BJ (cell line): ENCODE measurements at regions of chr11 and their contacts with region 1.

Region 1: GRCh38 chr11:61158616-61159381 is 2.4 kb downstream of the VPS37C start:
- DNase-seq: peak; percentile 67
- H3K4me3 ChIP-seq: no peak overlapping the region
- H3K27me3 ChIP-seq: no peaks in the 10 kb centered on the region
- CTCF ChIP-seq: no peak

Region 2: GRCh38 chr11:61102667-61103571 is 55.9 kb before region 1 on chr11:
- CTCF ChIA-PET with region 1: no interaction called
- POLR2A ChIA-PET with region 1: no interaction called
- DNase-seq: no peak
- H3K4me3 ChIP-seq: no peak overlapping the region
- H3K27me3 ChIP-seq: no peaks in the 10 kb centered on the region
- CTCF ChIP-seq: no peak

Region 3: DNA sequence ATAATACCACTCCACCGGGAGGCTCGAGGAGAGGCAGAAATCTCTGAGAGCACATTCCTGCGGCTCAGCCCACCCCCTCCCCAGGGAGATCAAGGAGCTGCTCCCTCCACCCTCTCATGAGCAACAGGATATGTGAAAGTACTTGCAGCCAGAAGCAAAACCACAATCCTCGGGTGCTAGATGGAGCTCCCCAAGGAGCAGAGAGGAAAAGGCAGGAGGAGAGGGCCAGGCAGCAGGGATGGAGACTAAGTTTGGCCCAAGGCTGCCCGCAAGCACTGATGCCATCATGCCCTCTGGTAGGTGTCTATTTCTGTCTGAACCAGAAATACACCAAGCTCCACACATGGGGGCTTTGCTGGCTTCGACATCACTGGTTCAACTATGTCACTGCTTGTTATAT is 19.9 kb before region 1 on chr11:
- CTCF ChIA-PET with region 1: no interaction called
- POLR2A ChIA-PET with region 1: interaction called, 10 read pairs
- DNase-seq: no peak
- H3K4me3 ChIP-seq: no peak overlapping the region
- H3K27me3 ChIP-seq: no peaks in the 10 kb centered on the region
- CTCF ChIP-seq: no peak